ENCODE measurements at regions of chr3 and their contacts with region 1.

Region 1: DNA sequence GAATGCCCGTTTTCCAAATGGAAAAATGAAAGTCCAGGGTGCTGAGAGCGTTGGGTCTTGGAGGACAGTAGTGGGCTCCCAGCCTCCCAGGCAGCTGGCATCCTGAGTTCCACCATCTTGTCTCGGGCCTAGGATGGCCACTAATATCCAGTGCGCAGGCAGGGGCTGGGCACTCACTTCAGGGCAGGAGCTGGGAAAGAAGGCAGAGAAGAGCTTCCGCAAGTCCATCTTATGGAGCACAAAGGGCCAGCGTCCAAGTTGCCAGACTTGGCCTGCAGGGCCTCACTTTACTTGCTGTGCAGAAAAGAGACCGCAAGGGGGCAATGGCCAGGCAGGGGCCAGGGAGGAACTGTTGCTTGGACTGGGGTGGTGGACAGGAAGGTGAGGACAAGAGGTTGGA is 46.1 kb downstream of the IQSEC1 start:
- DNase-seq: peak; percentile 61
- ATAC-seq: no peak; the same call in 1 of the 2 replicates
- H3K4me3 Mint-ChIP-seq: no peak overlapping the region
- H3K27ac Mint-ChIP-seq: no peak overlapping the region
- H3K4me1 Mint-ChIP-seq: peaks cover 11% of the 10 kb centered on the region
- H3K27me3 Mint-ChIP-seq: no peaks in the 10 kb centered on the region
- CTCF ChIP-seq: 0 out of 2 replicates have a peak, but pooled peaks have one; percentile 26

Region 2: GRCh38 chr3:12973827-12974226 is 53.3 kb before region 1 on chr3:
- CTCF ChIA-PET with region 1: no interaction called
- POLR2A ChIA-PET with region 1: no interaction called
- DNase-seq: no peak
- ATAC-seq: no peak
- H3K4me3 Mint-ChIP-seq: no peak overlapping the region
- H3K27ac Mint-ChIP-seq: no peak overlapping the region
- H3K4me1 Mint-ChIP-seq: peaks cover 20% of the 10 kb centered on the region
- H3K27me3 Mint-ChIP-seq: peaks cover 10% of the 10 kb centered on the region
- CTCF ChIP-seq: no peak

Region 3: GRCh38 chr3:13040361-13041074 is 13.4 kb after region 1 on chr3:
- CTCF ChIA-PET with region 1: interaction called, 14 read pairs
- POLR2A ChIA-PET with region 1: no interaction called
- DNase-seq: no peak
- ATAC-seq: no peak; the same call in 1 of the 2 replicates
- H3K4me3 Mint-ChIP-seq: no peak overlapping the region
- H3K27ac Mint-ChIP-seq: peak overlapping the region; percentile 80
- H3K4me1 Mint-ChIP-seq: peaks cover 13% of the 10 kb centered on the region
- H3K27me3 Mint-ChIP-seq: peaks cover 2% of the 10 kb centered on the region; the same call in 1 of the 2 replicates
- CTCF ChIP-seq: no peak

Measured in WTC11 (cell line).